Panc1 (cell line): ENCODE measurements at regions of chr12 and their contacts with region 1.

Region 1: DNA sequence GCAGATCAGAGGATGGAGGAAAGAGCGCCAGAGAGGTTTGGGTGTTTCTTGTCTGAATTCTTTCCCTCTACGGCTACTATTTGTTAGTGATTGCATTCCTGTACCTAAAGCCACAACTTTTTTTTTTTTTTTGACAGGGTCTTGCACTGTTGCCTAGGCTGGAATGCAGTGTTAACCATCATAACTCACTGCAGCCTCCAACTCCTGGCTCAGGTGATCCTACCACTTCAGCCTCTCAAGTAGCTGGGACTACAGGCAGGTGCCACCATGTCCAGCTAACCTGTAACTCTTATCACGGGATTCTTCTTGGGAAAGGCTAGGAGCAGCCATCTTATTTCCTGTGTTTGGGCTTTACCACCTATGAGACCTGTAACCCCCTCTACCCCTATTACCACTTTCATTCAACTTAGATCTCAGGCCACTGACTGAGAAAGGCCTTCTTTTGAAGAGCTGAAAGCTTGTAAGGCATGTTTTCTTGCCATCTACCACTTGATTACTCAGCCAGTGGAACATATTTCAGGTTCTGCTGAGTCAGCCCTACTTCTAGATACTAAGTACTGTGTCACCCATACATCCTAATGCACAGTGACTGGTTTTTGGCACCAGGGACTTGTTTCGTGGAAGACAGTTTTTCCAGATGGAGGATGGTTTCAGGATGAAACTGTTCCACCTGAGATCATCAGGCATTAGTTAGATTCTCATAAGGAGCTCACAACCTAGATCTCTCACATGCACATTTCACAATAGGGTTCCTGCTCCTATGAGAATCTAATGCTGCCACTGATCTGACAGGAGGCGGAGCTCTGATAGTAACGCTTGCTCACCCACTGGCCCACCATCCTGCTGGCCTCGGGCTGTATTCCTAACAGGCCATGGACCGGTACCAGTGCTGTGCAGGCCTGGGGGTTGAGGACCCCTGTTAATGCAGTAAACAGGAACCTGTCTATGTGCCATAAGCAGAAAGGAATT is 6.9 kb downstream of the VEZT start:
- DNase-seq: no peak
- ATAC-seq: no peak
- H3K4me3 ChIP-seq: no peak overlapping the region
- H3K27ac ChIP-seq: no peak overlapping the region
- H3K4me1 ChIP-seq: peaks cover 11% of the 10 kb centered on the region; the same call in 1 of the 2 replicates
- H3K27me3 ChIP-seq: no peaks in the 10 kb centered on the region
- CTCF ChIP-seq: no peak

Region 2: DNA sequence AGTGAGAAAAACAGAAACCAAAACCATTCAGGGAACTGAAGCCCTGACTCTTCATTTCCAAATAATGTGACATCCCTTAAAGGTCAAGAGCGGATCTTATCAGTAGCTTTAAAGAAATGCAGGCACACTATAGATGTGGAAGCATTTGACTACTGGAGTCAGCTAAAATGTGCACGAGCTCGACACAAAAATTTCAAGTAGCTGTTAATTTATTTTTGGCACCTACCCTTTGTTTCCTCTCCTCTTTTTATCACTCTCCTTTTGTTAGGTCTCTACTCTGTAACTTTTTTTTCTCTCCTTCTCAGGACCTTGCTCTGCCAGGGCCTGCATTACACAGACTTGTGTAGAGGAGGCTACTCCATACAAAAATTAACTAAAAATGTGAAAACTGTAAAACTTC is 65.6 kb before region 1 on chr12:
- CTCF ChIA-PET with region 1: no interaction called
- POLR2A ChIA-PET with region 1: no interaction called
- in situ Hi-C with region 1: no loop called
- intact Hi-C with region 1: no loop called
- DNase-seq: no peak
- ATAC-seq: no peak
- H3K4me3 ChIP-seq: no peak overlapping the region
- H3K27ac ChIP-seq: no peak overlapping the region
- H3K4me1 ChIP-seq: no peaks in the 10 kb centered on the region
- H3K27me3 ChIP-seq: no peaks in the 10 kb centered on the region
- CTCF ChIP-seq: no peak

Region 3: GRCh38 chr12:95428472-95428871 is 204.0 kb after region 1 on chr12:
- CTCF ChIA-PET with region 1: no interaction called
- POLR2A ChIA-PET with region 1: interaction called, 13 read pairs
- in situ Hi-C with region 1: no loop called
- intact Hi-C with region 1: no loop called
- DNase-seq: no peak
- ATAC-seq: no peak
- H3K4me3 ChIP-seq: no peak overlapping the region
- H3K27ac ChIP-seq: no peak overlapping the region
- H3K4me1 ChIP-seq: no peaks in the 10 kb centered on the region
- H3K27me3 ChIP-seq: no peaks in the 10 kb centered on the region
- CTCF ChIP-seq: no peak